ENCODE measurements at regions of chr9 and their contacts with region 1.

Region 1: GRCh38 chr9:21334701-21335632 is at the start of gene KLHL9:
- DNase-seq: peak; percentile 54 to 95
- H3K4me3 ChIP-seq: peak within 1 kb of the TSS; percentile 73 to 99
- H3K27ac ChIP-seq: peak within 1 kb of the TSS; percentile 86 to 97
- H3K4me1 ChIP-seq: peaks cover 9 to 27% of the 10 kb centered on the region in 2 donors
- H3K27me3 ChIP-seq: no peaks in the 10 kb centered on the region
- CTCF ChIP-seq: no peak
- total RNA-seq, gene KLHL9: 6.4 TPM

Region 2: DNA sequence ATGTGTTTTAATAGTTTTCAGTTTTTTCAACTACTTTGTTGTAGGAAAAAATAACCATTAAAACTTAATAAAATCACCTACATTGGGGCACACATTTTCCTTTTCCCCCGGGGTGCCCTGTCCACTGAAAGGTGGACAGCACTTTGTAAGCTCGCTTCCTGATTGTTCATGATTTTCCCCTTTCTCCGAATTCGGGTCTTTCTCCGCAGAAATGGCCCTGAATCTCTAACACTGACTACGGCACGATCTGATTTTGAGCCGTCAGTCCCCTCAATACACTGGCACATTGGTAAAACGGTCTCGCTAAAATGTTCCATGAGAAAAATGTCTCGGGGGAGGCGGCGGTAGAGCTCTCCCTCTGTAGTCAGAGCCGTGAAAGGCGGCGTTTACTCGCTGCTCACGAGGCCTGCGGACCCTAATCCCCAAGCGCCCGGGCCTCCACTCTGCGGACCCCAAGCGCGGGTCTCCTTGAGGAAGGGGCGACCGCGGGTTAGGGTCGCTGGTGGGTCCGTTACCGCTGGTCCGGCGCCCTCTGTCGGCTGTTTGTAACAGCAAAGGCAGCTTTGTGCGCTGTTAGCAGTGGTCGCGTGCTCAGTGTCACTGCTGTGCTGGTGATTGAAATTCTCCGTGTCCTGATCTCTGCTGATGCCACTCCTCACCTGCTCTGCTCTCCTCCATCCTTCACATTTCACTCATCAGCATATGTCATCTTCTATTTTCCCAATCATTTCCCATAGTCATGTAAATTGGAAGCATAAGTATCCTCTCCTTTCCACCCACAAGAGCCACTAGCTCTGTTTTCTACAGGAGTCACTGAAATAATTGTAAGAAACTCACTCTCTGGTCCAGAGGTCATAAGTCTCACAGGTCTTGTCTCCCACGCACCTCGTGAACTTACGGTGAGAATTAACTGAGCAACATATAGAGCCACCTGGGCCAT is 61.1 kb after region 1 on chr9:
- intact Hi-C with region 1: loop called (anchors 5 kb)
- DNase-seq: no peak
- H3K4me3 ChIP-seq: peak overlapping the region; percentile 50 to 63
- H3K27ac ChIP-seq: no peak overlapping the region
- H3K4me1 ChIP-seq: no peaks in the 10 kb centered on the region
- H3K27me3 ChIP-seq: no peaks in the 10 kb centered on the region
- CTCF ChIP-seq: peak; percentile 41 to 78 (median 64)

Region 3: DNA sequence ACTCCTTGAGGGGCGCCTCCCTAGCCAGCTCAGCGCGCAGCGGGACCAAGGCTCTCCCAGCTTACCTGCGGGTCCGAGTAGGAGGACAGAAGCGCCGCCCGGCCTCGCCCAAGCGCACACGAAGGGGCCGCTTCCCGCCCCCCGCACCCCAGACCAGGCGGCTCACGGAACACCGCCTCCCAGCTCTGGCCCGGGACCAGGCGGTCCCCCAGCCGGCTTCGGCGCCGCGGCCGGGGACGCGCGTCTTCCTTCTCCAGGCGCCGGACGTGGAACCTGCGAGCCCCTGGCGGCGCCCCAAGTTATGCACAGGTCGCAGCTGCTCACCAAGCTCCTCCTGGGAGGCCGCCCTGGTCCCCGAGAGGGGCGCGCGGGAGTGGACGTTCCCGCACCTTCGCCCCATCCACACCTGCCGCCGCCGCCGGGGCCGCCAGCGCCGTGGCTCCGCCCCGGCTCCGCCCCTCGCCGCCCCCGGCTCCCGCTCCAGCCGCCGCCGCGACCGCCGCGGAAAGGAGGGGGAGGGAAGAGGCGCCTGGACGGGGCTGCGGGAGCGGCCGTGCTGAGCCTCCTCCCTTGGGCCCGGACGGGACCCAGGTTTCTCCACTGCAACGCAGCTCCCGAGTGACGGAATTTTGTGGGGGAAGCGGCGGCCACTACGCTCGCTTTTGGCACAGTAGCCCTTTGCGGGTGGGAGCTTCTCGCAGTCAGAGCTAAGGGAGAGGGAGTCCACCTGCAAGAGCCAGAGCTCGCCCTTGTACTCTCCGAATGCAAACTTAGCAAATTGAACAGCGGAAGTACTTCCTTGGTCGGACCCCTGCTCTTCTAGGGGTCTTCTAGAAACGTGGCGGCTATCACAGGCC is 224.7 kb after region 1 on chr9:
- intact Hi-C with region 1: loop called (anchors 5 kb)
- DNase-seq: no peak
- H3K4me3 ChIP-seq: peak overlapping the region; percentile 61 to 62
- H3K27ac ChIP-seq: no peak overlapping the region
- H3K4me1 ChIP-seq: peaks cover 5 to 6% of the 10 kb centered on the region in 2 donors
- H3K27me3 ChIP-seq: peaks cover 11% of the 10 kb centered on the region
- CTCF ChIP-seq: no peak

Region 4: DNA sequence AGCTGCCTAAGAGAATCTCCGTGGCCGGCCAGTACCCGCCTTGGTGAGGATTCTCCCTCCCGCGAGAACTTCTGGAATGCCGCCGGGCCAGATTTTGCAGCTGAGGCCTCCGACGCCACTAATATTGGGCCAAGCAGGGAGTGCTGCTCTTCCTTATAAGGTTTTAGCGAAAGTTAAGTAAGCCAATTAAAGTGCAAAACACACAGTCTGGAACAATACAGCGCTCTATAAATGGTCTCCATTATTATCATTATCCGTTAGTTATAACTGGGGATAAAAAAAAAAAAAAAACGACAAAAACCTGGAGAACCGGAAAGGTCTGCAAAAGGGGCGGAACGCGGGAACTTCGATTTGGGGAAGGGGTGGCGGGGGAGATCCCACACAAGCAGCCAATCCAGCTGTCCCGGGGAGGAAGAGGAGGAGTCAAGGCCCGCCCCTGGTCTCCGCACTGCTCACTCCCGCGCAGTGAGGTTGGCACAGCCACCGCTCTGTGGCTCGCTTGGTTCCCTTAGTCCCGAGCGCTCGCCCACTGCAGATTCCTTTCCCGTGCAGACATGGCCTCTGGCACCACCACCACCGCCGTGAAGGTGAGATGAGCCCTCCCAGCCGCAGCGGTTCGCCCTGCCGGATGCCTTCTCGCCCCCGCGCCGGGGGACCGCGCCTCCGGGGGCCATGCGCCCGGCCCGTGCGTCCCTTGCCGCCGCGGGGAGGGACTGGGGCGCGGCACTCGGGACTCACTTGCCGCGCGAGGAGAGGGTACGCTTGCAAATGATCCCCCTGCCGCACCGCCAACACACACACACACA is 467.4 kb after region 1 on chr9 and contains the start of gene MTAP:
- intact Hi-C with region 1: loop called (anchors 2 kb)
- DNase-seq: peak; percentile 70 to 94
- H3K4me3 ChIP-seq: peak within 1 kb of the TSS; percentile 91 to 99
- H3K27ac ChIP-seq: peak within 1 kb of the TSS; percentile 87 to 91
- H3K4me1 ChIP-seq: peaks cover 0 to 10% of the 10 kb centered on the region in 2 donors
- H3K27me3 ChIP-seq: no peaks in the 10 kb centered on the region
- CTCF ChIP-seq: no peak
- total RNA-seq, gene MTAP: 34.7 TPM

Region 5: GRCh38 chr9:22103650-22104575 is 768.9 kb after region 1 on chr9:
- intact Hi-C with region 1: loop called (anchors 5 kb)
- DNase-seq: no peak
- H3K4me3 ChIP-seq: no peak overlapping the region
- H3K27ac ChIP-seq: peak overlapping the region; percentile 49 to 72
- H3K4me1 ChIP-seq: peaks cover 0 to 8% of the 10 kb centered on the region in 2 donors
- H3K27me3 ChIP-seq: no peaks in the 10 kb centered on the region
- CTCF ChIP-seq: no peak

Measured in ascending aorta (tissue), 2 donors.